Heart left ventricle (tissue), 16 donors: ENCODE measurements at regions of chr2 and their contacts with region 1.

Region 1: DNA sequence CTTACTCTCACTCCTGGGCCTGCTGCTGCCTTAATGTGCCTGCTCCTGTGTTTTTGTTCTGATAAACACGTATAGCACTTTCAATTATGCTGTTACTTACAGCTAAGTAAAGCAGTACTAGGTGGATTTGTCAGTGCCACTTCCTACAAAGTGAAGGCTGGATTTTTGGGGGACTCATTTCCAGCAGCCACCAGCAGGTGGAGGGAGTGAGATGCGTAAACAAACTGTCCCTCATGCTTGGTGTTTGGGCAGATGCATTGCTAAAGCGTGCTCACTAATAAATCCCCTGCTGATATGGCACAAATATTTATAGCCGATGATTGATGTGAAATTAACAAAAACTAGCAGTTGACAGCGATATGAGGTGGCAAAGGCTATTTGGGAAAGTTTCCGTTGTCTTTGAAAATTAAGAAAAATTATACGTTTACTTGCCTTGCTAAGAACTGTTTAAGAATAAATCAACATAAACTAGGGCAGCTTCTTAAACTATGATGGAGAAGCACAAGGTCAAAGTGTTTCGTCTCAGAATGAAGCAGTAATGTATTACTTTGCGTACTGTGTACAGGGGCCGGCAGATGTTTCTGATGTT is 101.7 kb downstream of the AGAP1 start:
- DNase-seq: peak in 4 of 5 donors; percentile 60 to 73 (median 66)
- ATAC-seq: peak; percentile 21 to 74 (median 65)
- H3K4me3 ChIP-seq: no peak overlapping the region
- H3K27ac ChIP-seq: no peak overlapping the region
- H3K4me1 ChIP-seq: peaks cover 0 to 12% (median 2%) of the 10 kb centered on the region in 12 donors
- H3K27me3 ChIP-seq: no peaks in the 10 kb centered on the region
- CTCF ChIP-seq: peak; percentile 65 to 94 (median 85)
- POLR2A ChIP-seq: no peak

Region 2: DNA sequence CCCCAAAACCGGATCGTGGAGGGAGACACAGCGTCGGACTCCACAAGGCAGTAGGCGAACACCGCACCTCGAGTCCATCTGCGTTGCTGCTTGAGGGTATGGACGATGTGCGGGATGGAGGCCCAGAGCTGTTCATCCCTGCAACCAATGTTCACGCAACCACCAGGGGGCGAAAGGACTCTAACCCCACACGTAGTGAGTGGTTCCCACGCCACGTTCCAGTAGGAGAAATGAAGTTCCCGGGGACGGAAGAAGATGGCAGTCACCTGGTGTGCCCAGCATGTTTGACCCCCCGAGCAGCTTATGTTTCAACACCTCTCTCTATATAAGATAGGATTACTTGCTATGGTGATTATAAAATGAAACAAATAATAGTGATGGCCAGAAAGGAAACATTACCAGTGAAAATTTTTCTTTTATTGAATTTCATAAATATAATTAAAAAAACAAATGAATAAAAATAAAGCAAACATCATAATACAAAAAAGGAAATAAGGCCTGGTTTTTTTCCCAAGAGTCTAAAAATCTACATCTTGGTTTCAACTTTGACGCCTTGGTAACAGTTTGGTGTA is 459.4 kb before region 1 on chr2:
- intact Hi-C with region 1: loop called (anchors 1 to 2 kb)
- DNase-seq: peak; percentile 71 to 87 (median 84)
- ATAC-seq: peak; percentile 73 to 96 (median 89)
- H3K4me3 ChIP-seq: no peak overlapping the region
- H3K27ac ChIP-seq: no peak overlapping the region
- H3K4me1 ChIP-seq: no peaks in the 10 kb centered on the region
- H3K27me3 ChIP-seq: no peaks in the 10 kb centered on the region
- CTCF ChIP-seq: peak; percentile 63 to 88 (median 74)
- POLR2A ChIP-seq: no peak

Region 3: GRCh38 chr2:235493775-235494715 is 101.5 kb before region 1 on chr2 and contains the start of gene AGAP1:
- intact Hi-C with region 1: loop called in 2 of 10 experiments (anchors 2 to 5 kb)
- DNase-seq: peak; percentile 89 to 94 (median 91)
- ATAC-seq: peak; percentile 84 to 95 (median 92)
- H3K4me3 ChIP-seq: peak within 1 kb of the TSS; percentile 53 to 94 (median 67)
- H3K27ac ChIP-seq: peak within 1 kb of the TSS; percentile 31 to 87 (median 78)
- H3K4me1 ChIP-seq: peaks cover 0 to 40% (median 24%) of the 10 kb centered on the region in 12 donors
- H3K27me3 ChIP-seq: peaks cover 0 to 23% (median 0%) of the 10 kb centered on the region in 9 donors
- CTCF ChIP-seq: no peak
- POLR2A ChIP-seq: peak in 1 of 2 donors; percentile 63
- total RNA-seq, gene AGAP1: 16.3 to 21.6 (median 19.3) TPM

Region 4: GRCh38 chr2:235654103-235654813 is 58.7 kb after region 1 on chr2:
- intact Hi-C with region 1: loop called in 1 of 10 experiments (anchors 5 kb)
- DNase-seq: no peak
- ATAC-seq: peak in 1 of 4 donors; percentile 49
- H3K4me3 ChIP-seq: no peak overlapping the region
- H3K27ac ChIP-seq: no peak overlapping the region
- H3K4me1 ChIP-seq: peaks cover 0 to 37% (median 16%) of the 10 kb centered on the region in 12 donors
- H3K27me3 ChIP-seq: peaks cover 0 to 6% (median 0%) of the 10 kb centered on the region in 9 donors
- CTCF ChIP-seq: no peak
- POLR2A ChIP-seq: no peak

Region 5: DNA sequence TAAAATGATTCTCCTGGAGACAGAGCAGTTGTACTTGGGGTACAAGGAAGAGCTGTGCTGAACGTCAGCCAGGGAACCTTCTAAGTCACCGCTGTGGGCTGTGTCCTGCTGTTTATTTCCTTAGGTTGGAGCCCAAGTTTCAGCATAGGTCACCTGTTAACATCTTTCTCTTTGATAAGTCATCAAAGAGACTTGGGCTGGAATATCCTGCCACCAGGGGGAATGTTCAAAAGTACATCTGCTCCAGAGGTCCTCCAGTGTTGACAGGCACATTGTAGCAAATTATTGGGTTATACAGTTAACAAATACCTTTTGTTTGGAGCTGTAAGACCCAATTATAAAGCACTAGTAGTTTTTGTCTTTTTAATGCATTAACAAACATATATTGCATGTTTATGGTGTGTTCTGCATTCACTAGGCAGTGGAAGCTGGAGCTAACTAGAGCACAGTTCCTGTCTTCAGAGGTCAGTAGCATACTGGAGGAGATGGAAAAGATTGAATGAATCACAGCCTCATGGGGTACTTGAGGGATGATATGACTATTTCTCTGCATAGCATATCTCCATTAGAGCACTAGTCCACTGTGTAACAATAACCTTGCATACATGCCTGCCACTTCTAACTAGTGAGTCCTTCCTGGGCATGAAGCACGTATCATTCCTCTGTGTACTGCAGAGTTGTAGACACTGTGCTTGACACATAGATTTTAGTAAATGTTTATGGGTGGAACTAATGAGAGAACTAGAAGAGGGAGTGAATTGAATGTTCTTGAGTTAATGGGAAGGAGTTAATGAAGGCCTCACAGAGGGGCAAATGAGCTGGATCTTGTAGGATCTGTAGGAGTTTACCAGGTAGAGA is 80.4 kb after region 1 on chr2:
- intact Hi-C with region 1: loop called in 5 of 10 experiments (anchors 2 to 5 kb)
- DNase-seq: no peak
- ATAC-seq: no peak
- H3K4me3 ChIP-seq: no peak overlapping the region
- H3K27ac ChIP-seq: no peak overlapping the region
- H3K4me1 ChIP-seq: peaks cover 0 to 41% (median 19%) of the 10 kb centered on the region in 12 donors
- H3K27me3 ChIP-seq: peaks cover 0 to 16% (median 0%) of the 10 kb centered on the region in 9 donors
- CTCF ChIP-seq: no peak
- POLR2A ChIP-seq: no peak